ENCODE measurements at regions of chr19 and their contacts with region 1.

Region 1: GRCh38 chr19:2543463-2544442 is 67.8 kb downstream of the GADD45B start:
- DNase-seq: peak in 1 of 2 donors; percentile 95
- H3K4me3 ChIP-seq: peak overlapping the region; percentile 18 to 20
- H3K27ac ChIP-seq: peak overlapping the region; percentile 74
- H3K4me1 ChIP-seq: peaks cover 74% of the 10 kb centered on the region
- H3K27me3 ChIP-seq: no peaks in the 10 kb centered on the region
- CTCF ChIP-seq: no peak
- POLR2A ChIP-seq: no peak

Region 2: DNA sequence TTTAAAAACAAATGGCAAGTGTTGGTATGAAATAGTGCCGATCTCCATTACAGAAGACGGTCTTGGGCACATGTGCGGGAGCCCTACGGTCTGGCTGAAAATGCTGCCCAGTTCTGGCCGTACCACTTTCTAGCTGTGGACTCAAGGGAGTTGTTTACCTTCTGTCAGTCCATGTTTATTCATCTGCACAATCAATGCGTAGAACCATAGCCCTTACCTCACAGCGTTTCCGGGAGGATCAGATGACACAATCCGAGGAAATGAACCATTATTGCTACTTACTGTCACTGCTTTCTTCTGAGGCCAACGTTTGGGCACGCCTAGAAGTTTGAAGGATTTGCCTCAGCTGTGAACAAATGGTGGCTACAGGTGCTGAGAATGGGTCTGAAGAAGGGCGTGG is 36.6 kb before region 1 on chr19:
- intact Hi-C with region 1: no loop called
- DNase-seq: no peak
- H3K4me3 ChIP-seq: no peak overlapping the region
- H3K27ac ChIP-seq: no peak overlapping the region
- H3K4me1 ChIP-seq: no peaks in the 10 kb centered on the region
- H3K27me3 ChIP-seq: no peaks in the 10 kb centered on the region
- CTCF ChIP-seq: no peak
- POLR2A ChIP-seq: no peak

Region 3: GRCh38 chr19:2578901-2579677 is 35.3 kb after region 1 on chr19:
- intact Hi-C with region 1: loop called (anchors 2 kb)
- DNase-seq: peak in 1 of 2 donors; percentile 95
- H3K4me3 ChIP-seq: peak overlapping the region; percentile 40 to 57
- H3K27ac ChIP-seq: peak overlapping the region; percentile 79
- H3K4me1 ChIP-seq: peaks cover 34% of the 10 kb centered on the region
- H3K27me3 ChIP-seq: no peaks in the 10 kb centered on the region
- CTCF ChIP-seq: peak; percentile 70 to 96 (median 89)
- POLR2A ChIP-seq: no peak

Region 4: GRCh38 chr19:2589441-2589840 is 45.7 kb after region 1 on chr19:
- intact Hi-C with region 1: no loop called
- DNase-seq: no peak
- H3K4me3 ChIP-seq: no peak overlapping the region
- H3K27ac ChIP-seq: no peak overlapping the region
- H3K4me1 ChIP-seq: peaks cover 7% of the 10 kb centered on the region
- H3K27me3 ChIP-seq: no peaks in the 10 kb centered on the region
- CTCF ChIP-seq: no peak
- POLR2A ChIP-seq: no peak

Region 5: DNA sequence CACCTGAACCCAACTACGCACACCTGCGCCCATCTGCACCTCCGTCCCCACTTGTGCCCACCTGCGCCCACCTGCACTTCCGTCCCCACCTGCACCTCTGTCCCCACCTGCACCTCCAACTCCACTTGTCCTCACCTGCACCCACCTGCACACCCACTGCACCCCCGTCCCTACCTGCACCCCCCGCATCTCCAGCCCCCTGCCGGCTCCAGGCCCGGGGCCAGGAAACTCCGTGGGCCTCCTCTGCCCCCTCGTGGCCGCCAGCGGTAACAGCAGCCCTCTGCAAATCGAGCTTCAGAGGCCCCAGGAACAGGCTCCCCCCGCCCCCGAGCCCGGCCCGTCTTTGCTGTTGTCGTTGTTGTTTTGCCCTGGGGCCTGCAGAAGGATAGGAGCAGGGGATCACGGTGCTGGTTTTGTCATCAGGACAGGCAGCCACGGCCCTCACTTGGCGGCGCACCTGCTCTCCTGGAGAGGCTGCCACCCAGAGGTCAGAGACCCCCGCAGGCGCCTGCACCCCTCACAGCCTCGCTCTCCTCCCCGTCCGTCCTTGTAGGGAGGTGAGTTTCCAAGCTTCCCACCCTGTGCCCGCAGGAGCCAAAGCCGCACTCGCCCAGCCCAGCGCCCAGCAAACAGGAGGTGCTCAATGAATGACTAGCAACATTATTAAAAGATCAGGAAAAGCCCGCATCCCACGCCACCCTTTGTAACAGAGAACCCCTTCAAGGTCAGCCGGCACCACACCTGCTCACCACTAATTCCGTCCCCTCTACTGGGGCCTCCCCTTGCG is 93.3 kb after region 1 on chr19:
- intact Hi-C with region 1: no loop called
- DNase-seq: no peak
- H3K4me3 ChIP-seq: no peak overlapping the region
- H3K27ac ChIP-seq: no peak overlapping the region
- H3K4me1 ChIP-seq: peaks cover 11% of the 10 kb centered on the region
- H3K27me3 ChIP-seq: no peaks in the 10 kb centered on the region
- CTCF ChIP-seq: peak; percentile 68 to 83 (median 77)
- POLR2A ChIP-seq: no peak

Measured in vagina (tissue), 2 donors.